AG04450 (cell line): ENCODE measurements at regions of chr13 and their contacts with region 1.

Region 1: GRCh38 chr13:46961719-46962118 is 64.9 kb upstream of the HTR2A start:
- DNase-seq: no peak
- H3K4me3 ChIP-seq: no peak overlapping the region
- H3K27ac ChIP-seq: no peak overlapping the region
- H3K27me3 ChIP-seq: no peaks in the 10 kb centered on the region
- CTCF ChIP-seq: no peak

Region 2: DNA sequence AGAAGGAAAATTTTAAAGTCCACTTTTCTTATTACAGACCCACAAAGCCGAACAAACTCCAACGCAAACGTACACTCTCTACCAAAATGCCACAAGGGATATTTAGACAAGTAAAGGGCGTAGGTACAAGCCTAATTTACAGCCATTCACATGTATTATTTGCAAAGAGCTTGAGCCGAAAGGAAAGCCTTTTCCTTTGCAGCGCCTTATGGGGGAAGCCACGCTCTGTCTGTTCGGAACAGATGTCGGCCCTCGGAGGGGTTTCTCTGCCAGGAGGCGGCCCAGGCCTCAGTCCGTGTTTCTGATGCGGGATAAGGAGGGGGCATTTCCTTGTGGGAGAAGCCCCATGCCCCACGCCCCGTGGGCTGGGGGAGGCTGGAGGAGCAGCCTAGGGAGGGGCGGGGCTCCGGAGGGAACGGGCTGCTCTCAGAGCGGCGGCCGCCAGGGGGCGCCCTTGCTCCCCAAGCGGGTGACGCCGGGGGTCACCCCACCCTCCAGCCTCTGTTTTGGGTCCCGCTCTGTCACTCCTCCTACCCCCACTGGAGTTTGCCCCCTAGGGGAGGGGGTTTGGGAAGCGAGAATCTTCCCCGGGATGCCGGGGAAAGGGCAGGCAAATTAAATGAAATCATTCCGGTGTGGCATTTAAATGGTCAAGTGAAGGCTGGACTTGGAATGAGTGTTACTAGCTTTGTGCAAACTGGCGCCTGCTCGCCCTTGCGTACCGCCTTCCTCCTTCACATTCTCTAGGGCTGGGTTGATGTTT is 67.7 kb before region 1 on chr13:
- CTCF ChIA-PET with region 1: interaction called, 11 read pairs
- POLR2A ChIA-PET with region 1: no interaction called
- DNase-seq: no peak
- H3K4me3 ChIP-seq: peak overlapping the region; percentile 73
- H3K27ac ChIP-seq: no peak overlapping the region
- H3K27me3 ChIP-seq: peaks cover 12% of the 10 kb centered on the region
- CTCF ChIP-seq: peak; percentile 91

Region 3: DNA sequence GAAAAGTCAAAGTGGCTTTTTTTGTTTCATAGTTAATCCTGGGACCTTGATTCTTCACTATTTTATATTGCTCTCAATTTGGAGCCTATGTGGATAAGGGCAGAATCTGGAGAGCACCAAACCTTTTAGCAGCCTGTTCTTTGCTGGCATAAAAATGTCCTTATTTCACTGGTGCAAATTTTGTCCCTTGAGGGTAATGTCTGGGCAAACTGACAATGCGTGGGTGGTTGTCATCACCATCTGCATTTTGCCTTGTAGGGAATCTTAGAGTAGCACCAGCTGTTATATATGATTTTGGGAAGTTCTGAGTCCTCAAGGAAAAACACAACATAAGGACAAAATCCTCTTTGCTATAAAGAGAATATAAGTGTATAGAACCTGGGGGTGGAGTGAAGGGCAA is 272.0 kb after region 1 on chr13:
- CTCF ChIA-PET with region 1: interaction called, 10 read pairs
- POLR2A ChIA-PET with region 1: no interaction called
- DNase-seq: no peak
- H3K4me3 ChIP-seq: no peak overlapping the region
- H3K27ac ChIP-seq: no peak overlapping the region
- H3K27me3 ChIP-seq: no peaks in the 10 kb centered on the region
- CTCF ChIP-seq: no peak